Gastrocnemius medialis (tissue), 4 donors: ENCODE measurements at regions of chr1 and their contacts with region 1.

Region 1: GRCh38 chr1:113978863-113979702 is at the start of gene OLFML3:
- DNase-seq: peak; percentile 71 to 81
- ATAC-seq: peak; percentile 64 to 67
- H3K4me3 ChIP-seq: peak within 1 kb of the TSS in 2 of 4 donors; percentile 14 to 25
- H3K27ac ChIP-seq: peak within 1 kb of the TSS; percentile 54 to 76 (median 72)
- H3K4me1 ChIP-seq: peaks cover 59 to 72% of the 10 kb centered on the region in 2 donors
- H3K27me3 ChIP-seq: no peaks in the 10 kb centered on the region
- CTCF ChIP-seq: peak; percentile 68 to 80 (median 73)
- POLR2A ChIP-seq: peak in 1 of 2 donors; percentile 15
- total RNA-seq, gene OLFML3: 5.9 to 17.1 (median 14.0) TPM

Region 2: GRCh38 chr1:113928941-113929749 is 49.9 kb before region 1 on chr1 and contains the start of gene HIPK1:
- in situ Hi-C with region 1: no loop called
- intact Hi-C with region 1: no loop called
- DNase-seq: peak; percentile 86 to 88
- ATAC-seq: peak; percentile 88 to 89
- H3K4me3 ChIP-seq: peak within 1 kb of the TSS; percentile 86 to 98 (median 90)
- H3K27ac ChIP-seq: peak within 1 kb of the TSS; percentile 92 to 98 (median 94)
- H3K4me1 ChIP-seq: peaks cover 45% of the 10 kb centered on the region in 2 donors
- H3K27me3 ChIP-seq: no peaks in the 10 kb centered on the region
- CTCF ChIP-seq: peak in 1 of 5 experiments; percentile 28
- POLR2A ChIP-seq: peak; percentile 79 to 82
- total RNA-seq, gene HIPK1: 54.4 to 67.6 (median 60.0) TPM

Region 3: DNA sequence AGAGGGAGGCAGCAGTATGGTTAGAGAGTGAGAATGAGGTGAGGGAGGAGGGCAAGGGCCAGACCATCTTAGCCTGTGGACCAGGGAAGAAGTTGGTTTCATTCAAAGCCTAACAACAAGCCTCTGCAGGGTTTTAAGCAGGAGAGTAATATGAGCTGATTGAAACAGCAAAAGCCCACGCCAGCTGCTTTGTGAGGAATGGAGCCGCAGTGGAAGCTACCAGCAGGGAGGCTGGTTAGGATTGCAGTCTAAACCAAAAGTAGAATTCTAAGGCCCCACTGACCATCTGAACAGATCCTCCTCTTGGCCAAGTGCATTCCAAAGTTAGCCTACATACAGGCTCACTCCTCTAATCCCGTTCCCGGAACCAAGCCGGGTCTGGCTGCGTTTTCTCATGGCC is 45.0 kb after region 1 on chr1:
- in situ Hi-C with region 1: no loop called
- intact Hi-C with region 1: loop called (anchors 2 kb)
- DNase-seq: peak; percentile 31 to 37
- ATAC-seq: peak; percentile 47 to 62
- H3K4me3 ChIP-seq: no peak overlapping the region
- H3K27ac ChIP-seq: peak overlapping the region; percentile 71 to 85 (median 82)
- H3K4me1 ChIP-seq: peaks cover 42 to 45% of the 10 kb centered on the region in 2 donors
- H3K27me3 ChIP-seq: no peaks in the 10 kb centered on the region
- CTCF ChIP-seq: no peak
- POLR2A ChIP-seq: no peak

Region 4: DNA sequence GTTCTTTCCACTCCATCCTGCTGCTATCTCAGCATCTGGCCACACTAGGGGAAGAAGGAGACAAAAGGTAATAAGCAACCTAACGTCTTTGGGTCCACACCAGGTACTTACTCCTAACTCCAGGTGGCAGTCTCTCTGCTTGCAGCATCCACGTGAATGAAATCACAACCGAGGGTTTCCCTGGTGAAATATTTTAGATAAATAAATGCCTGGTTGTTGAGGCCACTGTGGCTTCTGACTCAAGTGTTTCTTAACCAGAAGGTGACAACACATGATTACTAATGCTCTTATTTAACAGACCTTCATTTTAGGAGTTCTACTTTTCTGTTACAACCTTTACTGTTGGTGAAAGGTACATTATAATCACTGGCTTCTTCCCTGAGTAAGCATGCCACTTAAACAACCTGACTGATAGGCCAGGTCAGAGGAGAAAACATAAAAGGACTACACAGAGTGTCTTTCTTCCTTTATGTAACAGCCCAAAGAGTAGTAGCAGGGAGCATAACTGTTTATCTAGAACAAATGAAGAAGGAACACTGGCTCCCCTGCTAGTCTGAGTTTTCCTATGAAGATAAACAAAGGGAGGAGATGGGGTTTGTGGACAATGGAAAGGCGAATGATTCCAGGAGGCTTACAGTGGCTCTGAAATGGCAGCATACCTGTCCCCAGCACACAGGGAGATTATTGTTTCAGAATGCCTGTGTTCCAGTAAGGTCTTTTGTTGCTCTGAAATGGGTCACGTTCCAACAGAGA is 114.7 kb after region 1 on chr1:
- in situ Hi-C with region 1: loop called in 1 of 4 experiments (anchors 25 kb)
- intact Hi-C with region 1: no loop called
- DNase-seq: no peak
- ATAC-seq: peak; percentile 24 to 48
- H3K4me3 ChIP-seq: no peak overlapping the region
- H3K27ac ChIP-seq: peak overlapping the region in 2 of 4 donors; percentile 34 to 61
- H3K4me1 ChIP-seq: peaks cover 0 to 4% of the 10 kb centered on the region in 2 donors
- H3K27me3 ChIP-seq: no peaks in the 10 kb centered on the region
- CTCF ChIP-seq: no peak
- POLR2A ChIP-seq: no peak

Region 5: GRCh38 chr1:114219172-114219868 is 240.2 kb after region 1 on chr1:
- in situ Hi-C with region 1: no loop called
- intact Hi-C with region 1: loop called (anchors 2 kb)
- DNase-seq: no peak
- ATAC-seq: peak; percentile 33 to 68
- H3K4me3 ChIP-seq: peak overlapping the region in 1 of 4 donors; percentile 32
- H3K27ac ChIP-seq: no peak overlapping the region
- H3K4me1 ChIP-seq: peaks cover 0 to 6% of the 10 kb centered on the region in 2 donors
- H3K27me3 ChIP-seq: no peaks in the 10 kb centered on the region
- CTCF ChIP-seq: peak in 3 of 5 experiments; percentile 14 to 50 (median 25)
- POLR2A ChIP-seq: no peak

Region 6: DNA sequence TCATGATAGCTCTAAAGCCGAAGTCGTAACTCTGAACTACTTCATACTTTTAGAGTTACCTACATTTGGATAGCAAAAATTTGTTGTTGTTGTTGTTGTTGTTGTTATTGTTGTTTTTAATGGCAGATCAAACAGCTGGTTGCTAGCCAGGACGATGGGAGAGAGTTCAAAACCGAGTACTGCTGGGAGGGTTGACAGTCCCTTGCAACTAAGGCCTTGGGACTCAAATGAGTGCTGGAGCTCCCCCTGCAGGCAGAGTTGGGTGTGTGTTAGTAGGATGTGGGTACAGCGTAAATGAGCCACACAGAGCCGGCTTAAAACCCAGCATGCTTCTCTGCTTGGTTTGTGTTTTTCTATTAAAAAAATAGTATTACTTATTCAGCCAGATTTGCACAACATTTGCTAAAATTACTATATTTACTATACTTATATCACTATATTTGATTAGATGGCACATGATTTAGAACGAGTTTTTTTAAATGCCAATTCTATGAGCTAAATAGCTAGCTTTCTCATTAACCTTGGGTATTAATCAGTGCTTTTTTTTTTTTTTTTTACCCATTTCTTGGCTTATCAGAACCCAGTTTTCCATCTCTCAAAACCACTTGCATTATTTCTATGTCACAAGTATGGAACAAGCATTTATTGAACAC is 303.8 kb after region 1 on chr1:
- in situ Hi-C with region 1: loop called (anchors 5 kb)
- intact Hi-C with region 1: loop called (anchors 1 kb)
- DNase-seq: peak; percentile 67 to 80
- ATAC-seq: peak; percentile 98 to 100
- H3K4me3 ChIP-seq: no peak overlapping the region
- H3K27ac ChIP-seq: no peak overlapping the region
- H3K4me1 ChIP-seq: no peaks in the 10 kb centered on the region
- H3K27me3 ChIP-seq: no peaks in the 10 kb centered on the region
- CTCF ChIP-seq: peak; percentile 81 to 89 (median 87)
- POLR2A ChIP-seq: no peak